ENCODE measurements at regions of chr2 and their contacts with region 1.

Region 1: DNA sequence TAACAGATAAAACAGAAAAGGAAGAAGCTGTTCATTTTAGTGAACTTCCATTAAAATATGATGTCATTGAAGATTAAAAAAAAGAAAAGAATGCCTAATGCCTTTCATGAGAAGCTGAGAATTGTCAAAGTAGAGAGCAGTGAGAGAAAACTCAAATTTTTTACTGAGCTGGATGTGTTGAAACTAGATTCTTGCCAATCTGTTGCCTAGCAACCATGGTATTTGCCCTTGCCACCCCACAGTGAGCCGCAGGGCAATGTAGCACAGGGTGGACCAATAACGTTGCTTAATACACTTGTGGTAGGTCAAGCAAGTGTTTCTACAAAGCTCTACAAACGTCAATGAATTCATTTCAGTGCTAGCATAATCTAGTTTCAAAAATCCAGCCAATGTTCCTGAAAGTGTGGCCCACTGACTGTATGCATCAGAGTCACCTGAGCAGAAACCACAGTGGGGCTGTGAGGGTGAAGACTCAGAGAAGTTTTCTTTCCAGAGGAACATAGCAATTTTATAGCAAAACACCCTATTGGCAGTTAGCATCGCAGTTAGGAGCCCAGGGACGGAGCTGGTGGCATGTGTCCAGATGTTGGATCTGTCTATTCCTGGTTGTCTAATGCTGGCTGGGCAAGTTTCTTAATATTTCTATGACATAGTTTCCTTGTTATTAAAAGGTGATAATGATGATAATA is 132.2 kb downstream of the DOCK10 start:
- DNase-seq: no peak
- ATAC-seq: peak; percentile 96
- H3K4me3 ChIP-seq: no peak overlapping the region
- H3K27ac ChIP-seq: no peak overlapping the region
- H3K4me1 ChIP-seq: peaks cover 3% of the 10 kb centered on the region; the same call in 1 of the 2 replicates
- H3K27me3 ChIP-seq: no peaks in the 10 kb centered on the region
- CTCF ChIP-seq: no peak
- EP300 ChIP-seq: no peak
- POLR2A ChIP-seq: no peak
- RAD21 ChIP-seq: no peak

Region 2: DNA sequence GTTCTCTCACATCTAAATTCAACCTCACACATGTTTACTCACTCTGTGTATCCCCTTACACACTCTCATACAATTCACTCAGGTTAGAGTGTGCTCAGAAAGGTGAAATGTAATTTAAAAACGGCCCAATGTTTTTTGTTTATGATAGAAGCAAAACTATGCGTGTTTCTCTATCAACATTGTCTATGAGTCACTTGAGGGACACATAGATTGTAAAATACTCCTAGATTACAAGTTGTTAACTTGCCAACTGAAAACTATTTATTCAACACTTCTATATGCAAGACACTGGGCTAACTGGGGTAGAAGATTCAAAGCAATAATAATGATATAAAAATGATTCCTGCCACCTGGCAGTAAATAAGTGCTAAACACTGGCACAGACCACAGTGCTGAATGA is 218.5 kb before region 1 on chr2:
- CTCF ChIA-PET with region 1: no interaction called
- POLR2A ChIA-PET with region 1: no interaction called
- RAD21 ChIA-PET with region 1: no interaction called
- SMC1A ChIA-PET with region 1: no interaction called
- in situ Hi-C with region 1: no loop called
- intact Hi-C with region 1: no loop called
- DNase-seq: no peak
- ATAC-seq: no peak
- H3K4me3 ChIP-seq: no peak overlapping the region
- H3K27ac ChIP-seq: no peak overlapping the region
- H3K4me1 ChIP-seq: no peaks in the 10 kb centered on the region
- H3K27me3 ChIP-seq: no peaks in the 10 kb centered on the region
- CTCF ChIP-seq: no peak
- EP300 ChIP-seq: no peak
- POLR2A ChIP-seq: no peak
- RAD21 ChIP-seq: no peak

Region 3: DNA sequence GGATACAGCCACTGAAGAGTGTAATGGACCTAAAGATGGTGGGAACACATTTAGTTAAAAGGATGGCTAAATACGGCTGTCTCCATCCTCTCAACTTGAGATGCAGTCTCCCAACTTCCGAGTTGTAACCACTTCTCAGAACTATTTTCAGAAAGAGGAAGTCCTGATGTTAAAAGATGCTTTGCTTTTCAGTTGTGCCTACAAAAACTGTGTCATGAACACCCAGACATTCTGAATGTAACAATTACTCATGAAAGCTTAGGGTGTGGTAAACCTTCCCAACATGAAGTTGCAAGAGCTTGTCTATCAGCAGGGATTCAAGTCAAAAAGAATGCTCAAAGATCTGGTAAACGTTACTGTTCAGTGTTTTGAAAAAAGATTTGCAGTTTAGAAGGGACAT is 15.7 kb before region 1 on chr2:
- CTCF ChIA-PET with region 1: interaction called, 9 read pairs
- POLR2A ChIA-PET with region 1: no interaction called
- RAD21 ChIA-PET with region 1: interaction called, 5 read pairs
- SMC1A ChIA-PET with region 1: interaction called, 27 read pairs
- in situ Hi-C with region 1: no loop called
- intact Hi-C with region 1: no loop called
- DNase-seq: peak; percentile 71
- ATAC-seq: peak; percentile 90
- H3K4me3 ChIP-seq: peak overlapping the region; percentile 13; the same call in 1 of the 2 replicates
- H3K27ac ChIP-seq: peak overlapping the region; percentile 88
- H3K4me1 ChIP-seq: peaks cover 40% of the 10 kb centered on the region
- H3K27me3 ChIP-seq: no peaks in the 10 kb centered on the region
- CTCF ChIP-seq: no peak
- EP300 ChIP-seq: no peak
- POLR2A ChIP-seq: no peak
- RAD21 ChIP-seq: no peak

Region 4: DNA sequence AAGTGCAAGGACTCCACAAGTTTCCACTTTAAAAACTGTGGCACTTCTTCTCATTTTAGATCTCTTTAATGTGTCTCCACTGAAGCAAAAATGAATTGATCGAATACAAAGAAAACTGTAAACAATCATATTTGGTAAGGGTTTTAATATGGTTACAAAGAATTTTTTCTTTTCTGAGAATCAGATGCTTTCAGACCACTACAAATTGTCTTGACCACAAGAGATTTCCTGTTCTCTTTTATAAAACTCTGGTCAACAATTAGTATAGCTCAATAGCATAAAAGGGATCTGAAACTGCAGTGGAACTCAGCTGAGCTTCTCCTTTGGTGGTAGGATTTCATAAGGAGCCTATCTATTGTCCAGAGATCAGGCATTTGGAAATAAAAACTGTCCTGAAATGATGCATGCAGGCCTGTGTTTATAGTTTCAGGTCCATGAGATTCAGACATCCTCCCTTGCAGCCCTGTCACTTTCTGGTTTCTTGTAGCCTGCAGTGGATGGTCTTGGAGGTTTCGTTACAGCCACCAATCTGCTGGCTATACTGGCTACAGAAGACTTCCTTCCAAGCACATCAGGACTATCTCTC is 12.2 kb after region 1 on chr2:
- CTCF ChIA-PET with region 1: interaction called, 6 read pairs
- POLR2A ChIA-PET with region 1: no interaction called
- RAD21 ChIA-PET with region 1: interaction called, 4 read pairs
- SMC1A ChIA-PET with region 1: interaction called, 21 read pairs
- in situ Hi-C with region 1: no loop called
- intact Hi-C with region 1: no loop called
- DNase-seq: peak; percentile 71
- ATAC-seq: peak; percentile 78
- H3K4me3 ChIP-seq: no peak overlapping the region
- H3K27ac ChIP-seq: peak overlapping the region; percentile 47
- H3K4me1 ChIP-seq: peaks cover 45% of the 10 kb centered on the region
- H3K27me3 ChIP-seq: no peaks in the 10 kb centered on the region
- CTCF ChIP-seq: no peak
- EP300 ChIP-seq: peak; percentile 36 to 89; a peak in 3 of 4 replicates
- POLR2A ChIP-seq: no peak
- RAD21 ChIP-seq: no peak

Measured in GM12878 (cell line).